GM18951 (cell line): ENCODE measurements at regions of chr17 and their contacts with region 1.

Region 1: GRCh38 chr17:14228903-14229302 is 7.8 kb downstream of the CDRT15 start:
- POLR2A ChIP-seq: no peak

Region 2: DNA sequence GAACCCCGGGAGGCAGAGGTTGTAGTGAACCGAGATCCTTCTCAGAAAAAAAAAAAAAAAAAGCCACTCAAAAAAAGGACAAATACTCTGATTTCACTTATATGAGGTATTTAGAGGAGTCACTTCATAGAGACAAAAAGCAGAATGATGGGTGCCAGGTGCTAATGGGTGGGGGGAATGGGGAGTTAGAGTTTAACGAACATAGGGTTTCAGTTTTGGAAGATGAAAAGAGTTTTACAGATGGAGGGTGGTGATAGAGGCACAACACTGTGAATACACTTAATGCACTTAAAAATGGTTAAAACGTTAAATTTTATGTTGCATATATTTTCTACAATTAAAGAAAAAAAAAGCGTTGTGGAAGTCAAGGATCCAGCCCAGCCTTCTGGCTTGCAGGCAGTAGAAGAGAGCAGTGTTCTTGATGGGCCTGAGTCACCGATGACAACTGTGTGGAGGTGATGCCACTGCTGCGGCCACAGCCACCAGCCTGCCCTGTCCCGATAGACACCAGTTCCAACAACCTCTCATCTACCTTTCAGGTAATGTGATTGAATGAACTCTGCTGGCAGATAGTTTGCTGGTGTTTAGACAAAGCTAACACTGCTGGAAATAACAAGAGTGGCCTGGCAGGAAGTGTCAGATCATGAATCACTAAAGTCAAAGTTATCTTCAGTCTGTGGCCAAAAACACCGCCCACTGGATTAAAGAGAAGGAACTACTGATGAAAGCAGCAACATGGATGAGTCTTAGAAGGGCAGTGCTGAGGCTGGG is 209.5 kb before region 1 on chr17:
- in situ Hi-C with region 1: loop called (anchors 10 kb)
- POLR2A ChIP-seq: no peak